ENCODE measurements at regions of chr1 and their contacts with region 1.

Region 1: GRCh38 chr1:226308723-226309315 is at the start of gene LIN9:
- DNase-seq: peak; percentile 91 to 93
- ATAC-seq: peak; percentile 79 to 91 (median 85)
- H3K4me3 ChIP-seq: peak within 1 kb of the TSS; percentile 86 to 99 (median 98)
- H3K27ac ChIP-seq: peak within 1 kb of the TSS; percentile 72 to 97 (median 92)
- H3K4me1 ChIP-seq: peaks cover 2 to 34% (median 20%) of the 10 kb centered on the region in 9 donors
- H3K27me3 ChIP-seq: no peaks in the 10 kb centered on the region
- CTCF ChIP-seq: peak in 2 of 9 donors; percentile 16 to 18
- total RNA-seq, gene LIN9: 7.9 to 25.6 (median 19.2) TPM

Region 2: GRCh38 chr1:225944951-225945350 is 363.9 kb before region 1 on chr1:
- intact Hi-C with region 1: no loop called
- DNase-seq: no peak
- ATAC-seq: no peak
- H3K4me3 ChIP-seq: no peak overlapping the region
- H3K27ac ChIP-seq: no peak overlapping the region
- H3K4me1 ChIP-seq: peaks cover 12 to 41% (median 30%) of the 10 kb centered on the region in 9 donors
- H3K27me3 ChIP-seq: peaks cover 0 to 11% (median 0%) of the 10 kb centered on the region in 7 donors
- CTCF ChIP-seq: no peak

Region 3: GRCh38 chr1:226074046-226074445 is 234.8 kb before region 1 on chr1:
- intact Hi-C with region 1: no loop called
- DNase-seq: no peak
- ATAC-seq: no peak
- H3K4me3 ChIP-seq: no peak overlapping the region
- H3K27ac ChIP-seq: no peak overlapping the region
- H3K4me1 ChIP-seq: peaks cover 0 to 25% (median 9%) of the 10 kb centered on the region in 9 donors
- H3K27me3 ChIP-seq: no peaks in the 10 kb centered on the region
- CTCF ChIP-seq: no peak

Region 4: DNA sequence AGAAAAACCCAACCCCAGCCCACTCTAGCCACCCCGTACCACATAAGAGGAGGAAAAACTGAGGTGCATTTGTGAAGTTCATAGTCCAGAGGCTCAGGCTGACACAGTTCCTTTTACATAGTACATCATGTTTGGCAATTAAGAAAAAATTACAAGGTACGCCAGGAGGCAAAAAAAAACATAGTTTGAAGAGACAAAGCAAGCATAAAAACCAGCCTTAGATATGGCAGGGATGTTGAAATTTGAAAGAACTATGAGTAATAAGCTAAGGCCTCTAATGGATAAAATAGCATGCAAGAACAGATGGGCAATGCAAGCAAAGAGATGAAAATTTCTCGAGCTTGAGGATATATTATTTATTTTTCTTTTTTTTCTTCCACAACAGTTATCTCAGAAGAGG is 53.4 kb before region 1 on chr1:
- intact Hi-C with region 1: loop called in 1 of 10 experiments (anchors 2 kb)
- DNase-seq: no peak
- ATAC-seq: no peak
- H3K4me3 ChIP-seq: no peak overlapping the region
- H3K27ac ChIP-seq: no peak overlapping the region
- H3K4me1 ChIP-seq: no peaks in the 10 kb centered on the region
- H3K27me3 ChIP-seq: no peaks in the 10 kb centered on the region
- CTCF ChIP-seq: no peak

Region 5: DNA sequence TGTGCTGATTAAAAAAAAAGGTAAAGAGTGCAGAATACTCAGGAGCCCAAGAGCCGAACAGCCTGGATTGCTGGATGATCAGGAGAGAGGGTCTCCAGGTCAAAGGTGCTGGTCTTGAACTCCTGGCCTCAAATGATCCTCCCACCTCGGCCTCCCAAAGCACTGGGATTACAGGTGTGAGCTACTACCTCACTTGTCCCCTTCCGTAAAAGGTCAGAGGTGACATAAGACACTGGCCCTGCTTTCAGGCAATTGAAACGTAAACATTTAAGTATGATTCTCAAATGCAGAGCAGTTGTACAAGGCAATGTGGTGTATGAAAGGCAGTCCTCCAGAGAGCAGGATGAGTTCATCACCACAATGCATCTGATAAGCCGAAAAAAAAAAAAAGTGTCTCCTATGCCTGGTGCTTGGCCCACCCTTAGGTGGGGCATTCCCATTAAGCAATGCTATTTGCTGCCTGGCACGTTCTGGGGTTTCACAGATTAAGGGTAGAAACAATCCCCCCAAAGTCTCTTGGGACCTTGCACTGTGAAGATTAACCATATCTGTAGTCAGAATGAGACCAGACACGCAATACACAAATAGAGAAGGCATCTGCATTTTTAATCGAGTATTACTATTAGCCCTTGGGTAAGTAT is 51.4 kb after region 1 on chr1:
- intact Hi-C with region 1: loop called in 1 of 10 experiments (anchors 5 kb)
- DNase-seq: no peak
- ATAC-seq: no peak
- H3K4me3 ChIP-seq: no peak overlapping the region
- H3K27ac ChIP-seq: no peak overlapping the region
- H3K4me1 ChIP-seq: peaks cover 0 to 46% (median 26%) of the 10 kb centered on the region in 9 donors
- H3K27me3 ChIP-seq: no peaks in the 10 kb centered on the region
- CTCF ChIP-seq: no peak

Region 6: GRCh38 chr1:226407497-226408284 is 98.9 kb after region 1 on chr1 and contains the start of gene PARP1:
- intact Hi-C with region 1: loop called in 1 of 10 experiments (anchors 5 kb)
- DNase-seq: peak; percentile 83 to 89
- ATAC-seq: peak; percentile 82 to 96 (median 92)
- H3K4me3 ChIP-seq: peak within 1 kb of the TSS; percentile 57 to 98 (median 87)
- H3K27ac ChIP-seq: peak within 1 kb of the TSS; percentile 33 to 93 (median 87)
- H3K4me1 ChIP-seq: peaks cover 16 to 49% (median 44%) of the 10 kb centered on the region in 9 donors
- H3K27me3 ChIP-seq: no peaks in the 10 kb centered on the region
- CTCF ChIP-seq: peak; percentile 62 to 99 (median 78)
- total RNA-seq, gene PARP1: 98.9 to 154 (median 111) TPM

Region 7: DNA sequence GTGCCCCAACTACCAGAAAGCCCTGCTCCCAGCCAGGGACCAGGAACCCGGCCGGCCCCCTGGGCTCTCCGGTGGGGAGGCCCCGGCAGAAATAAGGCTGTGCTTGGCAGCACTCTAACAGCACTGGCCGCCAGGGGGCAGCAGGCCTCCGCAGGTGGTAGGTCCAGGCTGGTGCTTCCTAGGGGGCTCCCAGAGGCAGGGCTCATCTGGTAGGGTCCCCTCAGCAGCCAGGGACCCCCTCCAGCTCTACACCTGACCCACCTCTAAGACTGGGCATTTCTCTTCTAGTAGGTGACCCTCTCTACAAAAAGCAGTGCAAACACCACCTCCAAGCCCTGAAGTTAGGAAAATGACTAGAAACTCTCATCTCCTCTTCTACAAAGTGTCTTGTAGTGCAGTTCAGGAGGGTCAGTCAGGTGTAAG is 325.4 kb after region 1 on chr1:
- intact Hi-C with region 1: no loop called
- DNase-seq: peak; percentile 80 to 86
- ATAC-seq: peak; percentile 64 to 83 (median 79)
- H3K4me3 ChIP-seq: no peak overlapping the region
- H3K27ac ChIP-seq: peak overlapping the region in 8 of 10 donors; percentile 11 to 71 (median 40)
- H3K4me1 ChIP-seq: peaks cover 7 to 68% (median 40%) of the 10 kb centered on the region in 9 donors
- H3K27me3 ChIP-seq: no peaks in the 10 kb centered on the region
- CTCF ChIP-seq: peak; percentile 93 to 98 (median 95)

Region 8: GRCh38 chr1:226677027-226678020 is 368.5 kb after region 1 on chr1:
- intact Hi-C with region 1: no loop called
- DNase-seq: peak; percentile 74 to 79
- ATAC-seq: peak in 7 of 8 donors; percentile 17 to 80 (median 71)
- H3K4me3 ChIP-seq: peak overlapping the region in 4 of 10 donors; percentile 8 to 25 (median 15)
- H3K27ac ChIP-seq: peak overlapping the region; percentile 14 to 93 (median 90)
- H3K4me1 ChIP-seq: peaks cover 0 to 100% (median 87%) of the 10 kb centered on the region in 9 donors
- H3K27me3 ChIP-seq: no peaks in the 10 kb centered on the region
- CTCF ChIP-seq: no peak

Measured in heart right ventricle (tissue), 16 donors.